Activated CD8-positive, alpha-beta T cell treated with anti-CD3 and anti-CD28 coated beads for 36 hours (primary cell): ENCODE measurements at regions of chr10 and their contacts with region 1.

Region 1: DNA sequence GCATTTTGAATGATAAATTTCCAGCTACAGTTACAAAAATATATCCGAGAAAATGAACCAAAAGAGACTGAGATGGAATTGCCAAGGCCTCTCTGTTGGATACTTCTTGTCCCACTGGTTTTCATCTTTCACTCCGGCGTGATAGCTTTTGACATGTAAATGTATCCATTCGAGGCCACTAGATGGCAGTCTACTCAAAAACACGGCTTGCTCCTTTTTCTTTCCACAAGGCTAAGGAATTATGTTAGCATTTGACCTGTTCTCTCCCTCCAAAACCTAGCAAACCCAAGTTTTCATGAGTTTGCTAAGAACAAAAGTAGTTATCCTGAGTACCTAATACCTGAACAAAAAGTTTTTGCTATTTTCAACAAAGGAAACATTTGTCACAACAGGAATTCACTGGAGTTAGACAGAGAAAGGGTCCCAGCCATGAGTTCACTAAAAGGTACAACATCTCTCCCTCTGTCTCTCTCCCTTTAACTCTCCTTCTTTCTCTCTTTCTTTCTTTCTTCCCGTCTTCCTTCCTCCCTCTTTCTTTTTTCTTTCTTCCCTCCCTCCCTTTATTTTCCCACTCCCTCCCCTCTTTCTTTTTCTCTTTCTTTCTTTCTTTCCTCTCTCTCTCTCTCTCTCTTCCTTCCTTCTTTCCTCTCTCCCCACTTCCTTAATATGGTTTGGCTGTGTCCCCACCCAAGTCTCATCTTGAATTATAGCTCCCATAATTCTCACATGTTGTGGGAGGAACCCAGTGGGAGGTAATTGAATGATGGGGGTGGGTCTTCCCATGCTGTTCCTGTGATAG is 207.9 kb upstream of the MYO3A start:
- DNase-seq: peak; percentile 39
- ATAC-seq: no peak
- H3K4me3 Mint-ChIP-seq: no peak overlapping the region
- H3K27ac Mint-ChIP-seq: no peak overlapping the region
- H3K4me1 Mint-ChIP-seq: peaks cover 1% of the 10 kb centered on the region
- H3K27me3 Mint-ChIP-seq: peaks cover 4% of the 10 kb centered on the region
- CTCF ChIP-seq: peak; percentile 75

Region 2: GRCh38 chr10:25713894-25714240 is 12.2 kb before region 1 on chr10:
- CTCF ChIA-PET with region 1: interaction called, 10 read pairs
- POLR2A ChIA-PET with region 1: no interaction called
- intact Hi-C with region 1: no loop called
- DNase-seq: no peak
- ATAC-seq: no peak
- H3K4me3 Mint-ChIP-seq: no peak overlapping the region
- H3K27ac Mint-ChIP-seq: no peak overlapping the region
- H3K4me1 Mint-ChIP-seq: no peaks in the 10 kb centered on the region
- H3K27me3 Mint-ChIP-seq: peaks cover 9% of the 10 kb centered on the region
- CTCF ChIP-seq: no peak